Posterior cingulate gyrus (tissue), 11 donors: ENCODE measurements at regions of chr4 and their contacts with region 1.

Region 1: DNA sequence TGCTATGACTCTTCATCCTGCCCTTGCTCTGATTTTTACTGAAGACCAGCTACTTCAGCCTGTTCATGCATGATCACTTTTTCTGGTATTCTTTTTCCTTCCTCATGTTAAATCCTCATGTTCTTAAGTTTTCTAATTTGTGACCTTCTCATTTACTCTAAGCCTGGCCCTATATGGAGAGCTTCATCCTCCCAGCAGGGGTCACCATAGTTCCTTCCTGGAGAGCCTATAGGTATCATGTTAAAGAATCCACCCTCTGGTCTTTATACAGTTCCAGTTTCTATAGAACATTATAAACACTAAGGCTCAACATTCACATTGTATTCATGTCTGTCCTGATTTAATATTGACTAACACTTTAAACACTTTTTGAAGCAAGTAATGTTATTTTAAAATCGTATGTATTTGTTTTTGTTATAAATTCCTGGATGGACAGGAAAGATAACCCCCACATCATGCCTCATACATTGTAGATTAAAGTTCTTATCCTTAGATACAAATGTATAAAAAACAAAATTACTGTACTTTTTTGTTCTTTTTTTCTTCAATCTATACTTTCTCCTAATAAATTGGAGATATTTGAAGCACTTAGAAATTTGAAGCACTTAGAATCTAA is 53.8 kb upstream of the OTUD4 start:
- DNase-seq: peak in 6 of 10 donors; percentile 25 to 87 (median 52)

Region 2: DNA sequence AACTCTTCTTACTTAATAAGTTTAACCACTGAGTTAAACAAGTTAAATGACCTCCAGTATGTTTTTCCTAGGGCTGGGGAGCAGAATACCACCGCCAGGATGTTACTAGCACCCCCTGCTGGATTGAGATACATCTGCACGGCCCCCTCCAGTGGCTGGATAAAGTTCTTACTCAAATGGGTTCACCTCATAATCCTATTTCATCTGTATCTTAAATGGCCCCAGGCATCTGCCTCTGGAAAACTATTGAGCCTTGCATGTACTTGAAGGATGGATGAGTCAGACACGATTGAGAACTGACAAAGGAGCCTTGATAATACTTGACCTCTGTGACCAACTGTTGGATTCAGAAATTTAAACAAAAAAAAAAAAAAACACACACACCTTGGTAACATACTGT is 323.5 kb after region 1 on chr4:
- intact Hi-C with region 1: loop called (anchors 1 kb)
- DNase-seq: peak in 6 of 10 donors; percentile 33 to 90 (median 60)